ENCODE measurements at regions of chr16 and their contacts with region 1.

Region 1: GRCh38 chr16:8251298-8251697 is 339.0 kb downstream of the TMEM114 start:
- DNase-seq: no peak

Region 2: DNA sequence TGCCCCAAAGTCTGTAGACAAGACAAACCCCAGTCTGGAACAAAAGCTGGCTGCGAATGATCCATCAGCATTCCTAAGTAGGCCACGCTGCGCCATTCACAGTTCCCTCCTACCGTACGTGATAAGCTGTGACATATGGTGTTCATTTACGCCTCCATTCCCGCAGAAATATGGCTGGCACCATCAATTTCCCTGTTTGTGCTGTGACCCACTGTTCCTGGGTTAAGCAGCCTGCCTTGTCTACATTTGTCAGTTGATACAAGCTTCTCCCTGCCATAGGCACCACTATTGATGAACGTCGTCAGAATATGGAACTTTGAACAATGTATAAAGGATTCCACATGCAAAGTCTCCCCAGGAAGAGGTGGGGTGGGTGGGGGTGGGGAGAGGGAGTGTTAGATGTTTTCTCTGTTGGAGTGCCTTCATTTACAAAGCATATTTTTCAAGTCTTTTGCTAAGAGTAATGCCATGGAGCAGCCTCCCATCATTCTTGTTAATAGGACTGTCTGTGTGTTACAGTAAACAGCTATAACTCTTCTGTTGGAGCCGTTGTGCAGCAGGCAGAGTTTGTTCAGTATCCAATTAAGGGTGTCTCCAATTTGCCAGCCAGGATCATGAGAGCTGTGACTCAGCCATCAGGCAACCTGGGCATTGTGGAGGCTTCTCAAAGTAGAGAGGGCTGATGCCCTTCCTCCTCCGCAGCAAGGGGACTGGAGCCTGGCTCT is 44.4 kb after region 1 on chr16:
- intact Hi-C with region 1: loop called in 1 of 2 experiments (anchors 1 kb)
- DNase-seq: no peak